ENCODE measurements at regions of chr13 and their contacts with region 1.

Region 1: GRCh38 chr13:28324181-28324789 is 170.6 kb downstream of the FLT1 start:
- DNase-seq: peak in 4 of 5 donors; percentile 30 to 51 (median 39)
- H3K4me3 ChIP-seq: no peak overlapping the region
- H3K4me3 Mint-ChIP-seq: no peak overlapping the region
- H3K27ac ChIP-seq: no peak overlapping the region
- H3K27ac Mint-ChIP-seq: no peak overlapping the region
- H3K4me1 ChIP-seq: no peaks in the 10 kb centered on the region
- H3K4me1 Mint-ChIP-seq: no peaks in the 10 kb centered on the region
- H3K27me3 ChIP-seq: no peaks in the 10 kb centered on the region
- H3K27me3 Mint-ChIP-seq: peaks cover 0 to 2% of the 10 kb centered on the region in 2 donors

Region 2: GRCh38 chr13:28313579-28313978 is 10.7 kb before region 1 on chr13:
- CTCF ChIA-PET with region 1: interaction called, 16 read pairs
- POLR2A ChIA-PET with region 1: no interaction called
- intact Hi-C with region 1: no loop called
- DNase-seq: no peak
- H3K4me3 ChIP-seq: no peak overlapping the region
- H3K4me3 Mint-ChIP-seq: no peak overlapping the region
- H3K27ac ChIP-seq: no peak overlapping the region
- H3K27ac Mint-ChIP-seq: no peak overlapping the region
- H3K4me1 ChIP-seq: no peaks in the 10 kb centered on the region
- H3K4me1 Mint-ChIP-seq: no peaks in the 10 kb centered on the region
- H3K27me3 ChIP-seq: no peaks in the 10 kb centered on the region
- H3K27me3 Mint-ChIP-seq: peaks cover 0 to 1% of the 10 kb centered on the region in 2 donors

Region 3: GRCh38 chr13:28636674-28637317 is 312.5 kb after region 1 on chr13:
- CTCF ChIA-PET with region 1: interaction called, 14 read pairs
- POLR2A ChIA-PET with region 1: no interaction called
- intact Hi-C with region 1: no loop called
- DNase-seq: peak; percentile 37 to 56 (median 46)
- H3K4me3 ChIP-seq: no peak overlapping the region
- H3K4me3 Mint-ChIP-seq: peak overlapping the region in 6 of 8 donors; percentile 2 to 69 (median 34)
- H3K27ac ChIP-seq: no peak overlapping the region
- H3K27ac Mint-ChIP-seq: peak overlapping the region in 2 of 7 donors; percentile 0 to 1
- H3K4me1 ChIP-seq: peaks cover 9% of the 10 kb centered on the region
- H3K4me1 Mint-ChIP-seq: peaks cover 5 to 6% (median 6%) of the 10 kb centered on the region in 4 donors
- H3K27me3 ChIP-seq: no peaks in the 10 kb centered on the region
- H3K27me3 Mint-ChIP-seq: peaks cover 12 to 17% of the 10 kb centered on the region in 2 donors

Region 4: GRCh38 chr13:28792992-28793391 is 468.7 kb after region 1 on chr13:
- CTCF ChIA-PET with region 1: interaction called, 35 read pairs
- POLR2A ChIA-PET with region 1: no interaction called
- intact Hi-C with region 1: no loop called
- DNase-seq: no peak
- H3K4me3 ChIP-seq: no peak overlapping the region
- H3K4me3 Mint-ChIP-seq: no peak overlapping the region
- H3K27ac ChIP-seq: no peak overlapping the region
- H3K27ac Mint-ChIP-seq: no peak overlapping the region
- H3K4me1 ChIP-seq: no peaks in the 10 kb centered on the region
- H3K4me1 Mint-ChIP-seq: peaks cover 0 to 4% (median 0%) of the 10 kb centered on the region in 4 donors
- H3K27me3 ChIP-seq: no peaks in the 10 kb centered on the region
- H3K27me3 Mint-ChIP-seq: peaks cover 7 to 20% of the 10 kb centered on the region in 2 donors

Region 5: DNA sequence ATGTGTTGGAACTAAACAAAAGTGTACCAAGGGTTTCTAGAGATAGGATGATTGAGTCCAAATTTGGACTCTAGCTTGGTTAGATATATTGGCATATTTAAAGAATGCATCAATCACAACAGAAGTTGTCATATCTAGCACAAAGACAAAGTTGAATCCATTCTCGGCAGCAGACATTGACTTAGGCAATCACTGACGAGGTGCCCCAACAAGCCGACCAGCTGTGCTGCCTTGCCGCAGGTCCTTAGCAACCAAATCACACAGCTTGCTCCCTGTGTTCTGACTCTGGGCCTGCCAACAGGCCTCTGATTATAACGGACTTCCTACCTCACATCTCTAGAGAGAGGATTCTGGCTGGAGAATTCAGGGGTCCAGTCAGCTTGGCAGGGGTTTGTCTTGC is 704.6 kb after region 1 on chr13:
- CTCF ChIA-PET with region 1: no interaction called
- POLR2A ChIA-PET with region 1: no interaction called
- intact Hi-C with region 1: no loop called
- DNase-seq: no peak
- H3K4me3 ChIP-seq: no peak overlapping the region
- H3K4me3 Mint-ChIP-seq: no peak overlapping the region
- H3K27ac ChIP-seq: no peak overlapping the region
- H3K27ac Mint-ChIP-seq: no peak overlapping the region
- H3K4me1 ChIP-seq: no peaks in the 10 kb centered on the region
- H3K4me1 Mint-ChIP-seq: peaks cover 0 to 2% (median 0%) of the 10 kb centered on the region in 4 donors
- H3K27me3 ChIP-seq: no peaks in the 10 kb centered on the region
- H3K27me3 Mint-ChIP-seq: no peaks in the 10 kb centered on the region

Region 6: DNA sequence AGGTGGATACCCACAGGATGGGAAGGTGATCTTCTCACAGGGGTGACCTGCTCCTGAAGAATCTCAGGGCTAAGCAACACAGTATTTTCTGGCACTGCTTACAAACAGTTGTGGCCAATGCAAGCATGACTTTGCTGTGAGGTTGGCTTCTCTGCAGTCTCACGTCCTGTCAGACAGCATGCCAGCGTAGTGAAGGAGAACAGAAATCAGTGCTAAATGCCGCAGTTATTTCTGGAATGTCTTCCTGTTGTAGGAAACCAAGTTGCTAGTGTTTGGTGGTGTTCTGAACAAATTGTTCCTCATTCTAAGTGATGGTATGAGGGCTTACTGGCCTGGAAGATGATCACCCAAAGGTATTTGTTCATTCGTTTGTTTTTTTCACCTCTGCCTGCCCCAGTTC is 816.0 kb after region 1 on chr13:
- CTCF ChIA-PET with region 1: no interaction called
- POLR2A ChIA-PET with region 1: no interaction called
- intact Hi-C with region 1: no loop called
- DNase-seq: no peak
- H3K4me3 ChIP-seq: no peak overlapping the region
- H3K4me3 Mint-ChIP-seq: no peak overlapping the region
- H3K27ac ChIP-seq: no peak overlapping the region
- H3K27ac Mint-ChIP-seq: no peak overlapping the region
- H3K4me1 ChIP-seq: no peaks in the 10 kb centered on the region
- H3K4me1 Mint-ChIP-seq: no peaks in the 10 kb centered on the region
- H3K27me3 ChIP-seq: no peaks in the 10 kb centered on the region
- H3K27me3 Mint-ChIP-seq: peaks cover 2 to 6% of the 10 kb centered on the region in 2 donors

Region 7: GRCh38 chr13:29362849-29363604 is 1038.7 kb after region 1 on chr13:
- CTCF ChIA-PET with region 1: no interaction called
- POLR2A ChIA-PET with region 1: no interaction called
- intact Hi-C with region 1: loop called (anchors 10 kb)
- DNase-seq: peak in 4 of 5 donors; percentile 37 to 49 (median 43)
- H3K4me3 ChIP-seq: no peak overlapping the region
- H3K4me3 Mint-ChIP-seq: peak overlapping the region in 5 of 8 donors; percentile 1 to 38 (median 24)
- H3K27ac ChIP-seq: no peak overlapping the region
- H3K27ac Mint-ChIP-seq: peak overlapping the region in 1 of 7 donors; percentile 11
- H3K4me1 ChIP-seq: peaks cover 4% of the 10 kb centered on the region
- H3K4me1 Mint-ChIP-seq: peaks cover 0 to 4% (median 4%) of the 10 kb centered on the region in 4 donors
- H3K27me3 ChIP-seq: no peaks in the 10 kb centered on the region
- H3K27me3 Mint-ChIP-seq: peaks cover 9 to 13% of the 10 kb centered on the region in 2 donors

Measured in CD4-positive, alpha-beta memory T cell (primary cell).